Activated CD4-positive, alpha-beta T cell treated with anti-CD3 and anti-CD28 coated beads, Interleukin-2, amount 10 ng/mL, durations not matched to agents 24 days and 14 days (primary cell): ENCODE measurements at regions of chr3 and their contacts with region 1.

Region 1: GRCh38 chr3:154120961-154121700 is at the start of gene ARHGEF26:
- DNase-seq: peak; percentile 91
- H3K4me3 Mint-ChIP-seq: peak within 1 kb of the TSS; percentile 81
- H3K27ac Mint-ChIP-seq: no peak within 1 kb of the TSS
- H3K4me1 Mint-ChIP-seq: peaks cover 15% of the 10 kb centered on the region
- H3K27me3 Mint-ChIP-seq: peaks cover 70% of the 10 kb centered on the region
- total RNA-seq, gene ARHGEF26: 0.09 and 0.12 TPM in 2 replicates

Region 2: DNA sequence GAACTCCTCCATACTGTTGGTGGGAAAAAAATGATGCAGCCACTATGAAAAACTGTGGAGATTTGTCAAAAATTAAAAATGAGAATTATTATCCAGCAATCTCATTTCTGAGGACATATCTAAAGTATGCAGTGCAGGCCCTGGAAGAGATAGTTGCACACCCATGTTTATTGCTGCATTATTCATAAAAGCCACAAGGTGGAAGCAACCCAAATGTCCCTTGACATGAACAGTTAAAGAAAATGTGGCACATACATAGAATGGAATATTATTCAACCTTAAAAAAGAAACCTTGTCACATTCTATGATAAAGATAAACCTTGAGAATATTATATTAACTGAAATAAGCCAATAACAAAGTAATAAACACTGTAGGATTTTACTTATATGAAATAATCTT is 80.8 kb before region 1 on chr3:
- intact Hi-C with region 1: no loop called
- DNase-seq: no peak
- H3K4me3 Mint-ChIP-seq: no peak overlapping the region
- H3K27ac Mint-ChIP-seq: no peak overlapping the region
- H3K4me1 Mint-ChIP-seq: no peaks in the 10 kb centered on the region
- H3K27me3 Mint-ChIP-seq: peaks cover 4% of the 10 kb centered on the region

Region 3: DNA sequence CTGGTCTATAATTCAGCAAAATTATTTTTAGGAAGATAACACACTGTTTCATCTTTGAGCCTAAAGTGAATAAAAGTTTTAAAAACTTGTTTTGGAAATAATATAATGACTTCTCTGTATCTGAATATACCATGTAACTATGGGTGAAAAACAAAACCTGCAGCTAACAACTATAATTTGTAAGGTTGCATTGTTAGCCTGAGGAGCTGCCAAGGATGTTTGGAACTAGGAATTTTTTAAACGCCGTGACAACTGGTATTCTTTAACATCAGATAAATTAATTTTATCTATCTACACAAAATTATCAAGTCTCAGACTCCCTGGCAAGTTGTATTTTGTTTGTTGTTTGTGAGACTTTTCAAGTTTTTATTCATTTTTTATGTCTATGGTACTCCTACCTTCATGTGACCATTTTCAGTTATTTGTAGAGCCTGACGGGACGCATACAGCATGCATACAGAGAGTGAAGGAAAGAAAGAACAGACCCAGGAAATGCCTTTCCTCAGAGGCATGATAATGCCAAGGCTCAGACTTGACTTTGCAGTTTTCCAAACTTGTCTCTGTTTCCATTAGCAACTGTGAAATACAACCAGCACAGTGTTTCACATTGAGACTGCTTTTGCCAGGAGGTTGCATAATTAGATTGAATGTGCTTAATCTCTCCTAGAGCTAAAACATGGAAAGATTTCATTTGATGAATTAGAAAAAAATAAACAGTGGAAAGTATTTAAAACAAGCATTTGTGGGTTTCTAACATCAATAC is 60.7 kb before region 1 on chr3:
- intact Hi-C with region 1: no loop called
- DNase-seq: no peak
- H3K4me3 Mint-ChIP-seq: no peak overlapping the region
- H3K27ac Mint-ChIP-seq: no peak overlapping the region
- H3K4me1 Mint-ChIP-seq: no peaks in the 10 kb centered on the region
- H3K27me3 Mint-ChIP-seq: no peaks in the 10 kb centered on the region

Region 4: GRCh38 chr3:154235330-154235729 is 114.2 kb after region 1 on chr3:
- intact Hi-C with region 1: loop called (anchors 5 kb)
- DNase-seq: no peak
- H3K4me3 Mint-ChIP-seq: no peak overlapping the region
- H3K27ac Mint-ChIP-seq: no peak overlapping the region
- H3K4me1 Mint-ChIP-seq: peaks cover 9% of the 10 kb centered on the region
- H3K27me3 Mint-ChIP-seq: peaks cover 2% of the 10 kb centered on the region

Region 5: DNA sequence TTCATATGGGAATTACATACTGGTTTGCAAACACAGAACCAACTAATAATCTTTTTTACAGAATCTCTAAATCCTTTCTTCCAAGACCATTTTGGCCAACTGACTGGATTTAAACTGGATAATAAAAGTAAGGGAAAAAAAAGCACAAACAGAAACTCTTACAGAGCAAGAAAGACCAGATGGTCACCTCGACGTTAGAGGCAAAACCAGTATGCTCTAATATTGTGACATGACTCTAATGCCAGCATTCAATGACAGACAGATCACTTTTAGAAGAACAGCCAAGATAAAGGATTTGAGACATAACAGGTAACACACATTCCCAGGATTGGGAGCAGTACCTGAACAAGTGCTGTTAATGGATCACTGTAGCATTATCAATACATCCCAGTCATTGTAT is 152.2 kb after region 1 on chr3:
- intact Hi-C with region 1: no loop called
- DNase-seq: no peak
- H3K4me3 Mint-ChIP-seq: no peak overlapping the region
- H3K27ac Mint-ChIP-seq: no peak overlapping the region
- H3K4me1 Mint-ChIP-seq: no peaks in the 10 kb centered on the region
- H3K27me3 Mint-ChIP-seq: no peaks in the 10 kb centered on the region